ENCODE measurements at regions of chr2 and their contacts with region 1.

Region 1: DNA sequence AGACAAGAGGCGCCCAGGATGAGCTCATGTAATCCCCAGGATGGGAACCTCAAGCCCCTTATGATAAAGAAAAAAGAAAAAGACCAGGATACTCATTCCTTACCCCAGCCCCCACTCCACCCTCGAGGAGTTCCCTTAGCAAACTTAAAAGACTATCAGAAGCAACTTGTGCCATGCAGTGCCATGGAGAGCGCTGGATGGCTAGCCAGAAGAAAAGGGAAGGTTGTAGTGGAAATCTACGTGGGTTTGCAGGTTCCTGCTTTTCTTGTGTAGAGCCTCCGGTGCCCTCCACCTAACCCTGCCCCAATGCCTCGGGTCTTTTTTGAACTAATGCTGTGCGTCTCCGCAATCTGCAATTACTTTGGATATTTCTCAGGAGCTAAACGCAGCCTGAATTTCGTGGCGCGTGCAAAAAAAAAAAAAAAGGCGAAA is 16.2 kb upstream of the BCL11A start:
- DNase-seq: no peak
- ATAC-seq: no peak
- H3K4me3 ChIP-seq: peak overlapping the region; percentile 30
- H3K27ac ChIP-seq: no peak overlapping the region
- H3K4me1 ChIP-seq: no peaks in the 10 kb centered on the region
- H3K27me3 ChIP-seq: peaks cover 19% of the 10 kb centered on the region

Region 2: DNA sequence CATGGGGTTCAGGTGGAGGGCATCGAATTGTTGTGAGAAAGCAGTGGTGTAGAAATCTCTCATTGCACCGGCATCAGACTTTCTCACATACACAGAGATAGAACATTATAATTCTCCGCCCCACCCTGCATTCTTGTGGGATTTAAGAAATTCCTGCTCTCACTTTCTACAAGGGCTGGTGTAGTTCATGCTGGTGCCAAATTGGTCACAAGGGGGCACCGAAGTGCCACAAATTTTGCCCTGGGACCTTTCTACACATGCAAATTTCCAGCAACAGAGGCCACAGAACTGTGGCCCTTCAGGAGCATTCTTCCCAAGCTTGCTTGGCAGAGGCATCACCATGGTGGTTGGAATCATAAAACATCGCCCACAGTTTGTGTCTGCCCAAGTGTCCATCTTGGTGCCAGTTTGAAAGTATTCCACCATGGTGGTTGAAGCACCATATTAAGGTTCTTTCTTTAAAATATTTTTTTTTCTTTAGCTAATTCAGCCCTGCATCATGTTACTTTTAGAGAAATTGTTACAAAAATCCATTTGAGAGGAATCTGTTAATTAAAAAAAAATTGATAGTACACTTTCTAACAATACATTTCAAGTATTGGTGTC is 1807.4 kb before region 1 on chr2:
- intact Hi-C with region 1: loop called in 1 of 4 experiments (anchors 10 kb)
- DNase-seq: peak in 2 of 3 donors; percentile 13 to 54
- ATAC-seq: no peak
- H3K4me3 ChIP-seq: no peak overlapping the region
- H3K27ac ChIP-seq: no peak overlapping the region
- H3K4me1 ChIP-seq: no peaks in the 10 kb centered on the region
- H3K27me3 ChIP-seq: no peaks in the 10 kb centered on the region

Region 3: DNA sequence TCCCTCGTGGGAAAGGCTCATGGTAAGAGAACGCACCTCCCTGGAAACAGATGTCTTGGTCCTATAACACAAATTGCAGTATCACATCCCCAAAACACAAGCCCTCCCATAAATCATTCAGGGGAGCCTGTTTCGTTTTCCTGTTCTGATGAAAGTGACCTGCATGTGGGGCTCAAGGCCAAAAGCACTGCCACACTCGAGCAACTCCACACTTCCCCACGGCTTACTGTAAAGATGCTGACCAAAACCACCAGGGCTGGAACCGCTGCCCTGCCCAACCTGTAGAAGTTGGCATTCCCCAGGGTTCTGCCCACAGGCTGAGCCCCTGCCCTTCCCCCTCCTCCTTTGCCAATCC is 155.9 kb before region 1 on chr2:
- intact Hi-C with region 1: no loop called
- DNase-seq: no peak
- ATAC-seq: no peak
- H3K4me3 ChIP-seq: no peak overlapping the region
- H3K27ac ChIP-seq: no peak overlapping the region
- H3K4me1 ChIP-seq: peaks cover 2% of the 10 kb centered on the region
- H3K27me3 ChIP-seq: no peaks in the 10 kb centered on the region

Measured in right cardiac atrium (tissue), 5 donors.